ENCODE measurements at regions of chr1 and their contacts with region 1.

Region 1: DNA sequence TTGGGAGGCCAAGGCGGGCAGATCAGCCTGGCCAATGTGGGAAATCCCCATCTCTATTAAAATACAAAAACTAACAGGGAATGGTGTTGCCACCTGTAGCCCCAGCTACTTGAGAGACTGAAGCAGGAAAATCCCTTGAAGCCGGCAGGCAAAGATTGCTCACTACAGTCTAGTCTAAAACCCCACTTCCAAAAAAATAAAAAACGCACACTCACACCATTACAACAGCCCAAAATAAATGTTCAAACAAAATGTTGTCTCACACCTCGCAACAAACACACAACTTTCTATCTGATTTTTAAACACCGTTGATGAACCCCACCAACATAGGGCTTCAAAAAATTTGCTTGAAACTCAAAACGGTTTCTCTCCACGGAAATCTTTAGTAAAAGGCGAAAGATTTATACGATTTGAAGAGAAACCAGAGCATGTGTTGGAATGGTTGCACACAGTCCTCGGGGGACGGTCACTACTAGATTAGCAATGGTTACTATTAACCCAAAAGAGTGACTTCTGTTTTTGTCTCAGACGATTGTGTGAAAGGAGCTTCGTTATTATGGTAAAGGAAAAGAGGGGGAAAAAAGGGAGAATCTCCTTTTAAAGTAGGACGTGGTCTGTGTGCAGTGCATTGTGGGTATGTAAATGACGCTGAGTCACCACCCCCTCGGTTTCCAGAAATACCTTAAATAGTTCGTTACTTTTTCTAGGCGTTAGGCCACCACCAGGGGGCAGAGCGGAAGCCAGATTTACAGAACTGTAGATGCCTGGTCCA is at the start of gene RNU5D-1:
- DNase-seq: peak; percentile 84
- ATAC-seq: peak; percentile 71
- H3K4me3 Mint-ChIP-seq: peak within 1 kb of the TSS; percentile 78
- H3K27ac Mint-ChIP-seq: peak within 1 kb of the TSS; percentile 100
- H3K4me1 Mint-ChIP-seq: peaks cover 37% of the 10 kb centered on the region
- H3K27me3 Mint-ChIP-seq: no peaks in the 10 kb centered on the region
- CTCF ChIP-seq: peak; percentile 39
- total RNA-seq, gene RNU5D-1: not detected in 2 replicates

Region 2: DNA sequence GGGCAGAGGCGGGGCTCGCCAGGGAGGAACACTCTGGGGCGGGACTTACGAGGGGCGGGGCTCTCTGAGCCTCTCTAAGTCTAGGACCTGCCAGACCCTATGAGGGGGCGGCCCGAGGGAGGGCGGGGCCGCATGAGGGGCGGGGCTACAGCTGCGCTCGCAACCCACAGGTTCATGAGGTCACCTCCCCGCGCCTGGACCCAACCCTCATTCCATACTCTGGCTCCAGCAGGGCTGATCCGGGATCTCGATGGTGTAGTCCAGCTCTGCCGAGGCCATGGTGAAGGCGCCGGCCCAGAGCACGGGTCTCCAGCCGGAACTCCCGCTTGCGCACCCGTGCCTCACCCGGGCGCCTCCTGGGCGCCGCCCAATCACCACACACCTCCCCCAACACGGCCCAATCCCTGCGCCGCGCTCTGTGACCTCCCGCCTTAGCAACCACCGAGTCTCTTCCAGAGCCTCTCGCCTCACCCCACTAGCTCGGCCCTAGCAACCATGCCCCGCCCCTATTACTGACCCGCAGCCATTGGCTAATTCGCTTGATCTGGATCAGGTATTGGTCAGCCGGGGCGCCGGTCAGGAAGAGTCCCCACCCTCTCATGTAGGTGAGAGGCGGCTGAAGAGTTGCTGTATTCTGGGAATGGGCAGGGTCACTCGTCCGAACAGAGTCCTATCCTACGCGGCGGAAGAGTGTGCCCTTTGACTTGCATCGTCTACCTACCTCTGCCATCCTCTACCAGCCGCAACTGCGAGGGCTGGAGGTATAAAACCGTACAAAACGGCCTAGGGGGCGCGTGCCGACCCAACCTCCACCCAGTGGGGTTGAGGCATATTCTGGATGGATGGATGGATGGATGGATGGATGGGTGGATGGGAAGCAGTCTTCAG is 56.6 kb before region 1 on chr1 and contains the starts of genes ARMH1 and TMEM53:
- CTCF ChIA-PET with region 1: interaction called, 3 read pairs
- POLR2A ChIA-PET with region 1: interaction called, 21 read pairs
- intact Hi-C with region 1: loop called (anchors 2 kb)
- DNase-seq: peak; percentile 98
- ATAC-seq: peak; percentile 90
- H3K4me3 Mint-ChIP-seq: peak within 1 kb of the TSS; percentile 87
- H3K27ac Mint-ChIP-seq: peak within 1 kb of the TSS; percentile 93
- H3K4me1 Mint-ChIP-seq: peaks cover 32% of the 10 kb centered on the region
- H3K27me3 Mint-ChIP-seq: no peaks in the 10 kb centered on the region
- CTCF ChIP-seq: no peak
- total RNA-seq, gene ARMH1: 18.1 and 19.9 TPM in 2 replicates
- total RNA-seq, gene TMEM53: 4.6 and 4.8 TPM in 2 replicates

Region 3: DNA sequence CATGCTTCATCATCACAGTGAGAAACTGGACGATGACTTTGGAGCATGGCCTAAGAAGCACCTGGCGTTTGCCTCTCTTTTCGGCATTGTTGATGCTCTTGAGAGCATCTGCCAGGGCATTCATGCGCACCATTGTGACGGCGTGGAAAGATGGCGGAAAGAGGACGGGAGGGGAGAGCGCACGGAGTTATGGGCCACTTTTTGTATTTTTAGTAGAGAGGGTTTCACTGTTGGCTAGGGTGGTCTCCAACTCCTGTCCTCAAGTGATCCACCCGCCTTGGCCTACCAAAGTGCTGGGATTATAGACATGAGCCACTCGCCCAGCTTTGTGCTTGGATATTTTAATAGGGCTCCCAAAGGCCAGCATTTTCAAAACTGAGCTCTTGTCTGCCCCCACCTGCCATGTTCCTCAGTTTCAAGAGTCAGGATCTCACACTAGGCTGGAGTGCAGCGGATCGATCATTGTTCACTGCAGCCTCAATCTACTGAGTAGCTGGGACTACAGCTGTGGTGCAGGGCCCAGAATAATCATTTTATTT is 49.7 kb after region 1 on chr1:
- CTCF ChIA-PET with region 1: interaction called, 13 read pairs
- POLR2A ChIA-PET with region 1: interaction called, 149 read pairs
- intact Hi-C with region 1: loop called (anchors 1 kb)
- DNase-seq: no peak
- ATAC-seq: no peak
- H3K4me3 Mint-ChIP-seq: no peak overlapping the region
- H3K27ac Mint-ChIP-seq: peak overlapping the region; percentile 30
- H3K4me1 Mint-ChIP-seq: peaks cover 56% of the 10 kb centered on the region
- H3K27me3 Mint-ChIP-seq: no peaks in the 10 kb centered on the region
- CTCF ChIP-seq: no peak

Region 4: DNA sequence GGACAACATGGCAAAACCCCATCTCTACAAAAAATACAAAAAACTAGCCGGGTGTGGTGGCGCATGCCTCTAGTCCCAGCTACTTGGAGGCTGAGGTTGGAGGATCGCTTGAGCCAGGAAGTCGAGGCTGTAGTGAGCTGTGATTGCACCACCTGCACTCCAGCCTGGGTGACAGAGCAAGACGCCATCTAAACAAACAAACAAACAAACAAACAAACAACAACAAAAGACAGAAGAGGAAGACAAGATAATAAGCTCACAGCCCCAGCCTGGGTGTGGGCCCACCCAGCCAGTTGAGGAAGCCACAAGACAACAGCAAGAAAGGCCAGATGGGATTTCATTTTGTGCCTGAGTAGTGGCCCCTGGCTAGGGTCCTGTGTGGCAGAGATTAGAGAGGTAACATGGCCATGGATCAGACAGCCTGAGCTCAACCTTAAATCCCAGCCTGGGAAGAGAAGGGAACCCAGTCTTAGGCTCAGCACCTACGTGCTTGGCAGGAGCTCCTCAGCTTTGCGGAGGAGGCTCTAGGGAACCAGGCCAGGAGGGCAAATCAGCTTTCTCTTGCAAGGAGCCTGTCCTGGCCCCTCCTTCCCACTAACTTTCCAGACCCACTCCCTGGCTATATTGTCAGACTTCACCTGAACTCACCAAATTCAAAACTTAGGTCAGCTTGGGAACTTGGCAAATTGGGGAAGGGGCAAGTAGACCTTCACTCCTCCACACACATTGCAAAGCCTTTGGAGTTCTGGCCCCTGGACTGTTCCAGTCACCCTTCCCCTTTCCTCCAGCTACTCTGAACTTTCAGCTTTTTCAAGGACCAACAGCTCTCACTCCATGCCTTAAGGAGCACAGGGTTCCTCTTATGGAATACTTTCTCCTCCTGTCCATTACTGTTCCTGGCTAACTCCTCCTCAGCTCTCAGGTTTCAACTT is 62.1 kb after region 1 on chr1:
- CTCF ChIA-PET with region 1: interaction called, 13 read pairs
- POLR2A ChIA-PET with region 1: interaction called, 62 read pairs
- intact Hi-C with region 1: no loop called
- DNase-seq: no peak
- ATAC-seq: no peak
- H3K4me3 Mint-ChIP-seq: no peak overlapping the region
- H3K27ac Mint-ChIP-seq: no peak overlapping the region
- H3K4me1 Mint-ChIP-seq: no peaks in the 10 kb centered on the region
- H3K27me3 Mint-ChIP-seq: no peaks in the 10 kb centered on the region
- CTCF ChIP-seq: no peak

Region 5: DNA sequence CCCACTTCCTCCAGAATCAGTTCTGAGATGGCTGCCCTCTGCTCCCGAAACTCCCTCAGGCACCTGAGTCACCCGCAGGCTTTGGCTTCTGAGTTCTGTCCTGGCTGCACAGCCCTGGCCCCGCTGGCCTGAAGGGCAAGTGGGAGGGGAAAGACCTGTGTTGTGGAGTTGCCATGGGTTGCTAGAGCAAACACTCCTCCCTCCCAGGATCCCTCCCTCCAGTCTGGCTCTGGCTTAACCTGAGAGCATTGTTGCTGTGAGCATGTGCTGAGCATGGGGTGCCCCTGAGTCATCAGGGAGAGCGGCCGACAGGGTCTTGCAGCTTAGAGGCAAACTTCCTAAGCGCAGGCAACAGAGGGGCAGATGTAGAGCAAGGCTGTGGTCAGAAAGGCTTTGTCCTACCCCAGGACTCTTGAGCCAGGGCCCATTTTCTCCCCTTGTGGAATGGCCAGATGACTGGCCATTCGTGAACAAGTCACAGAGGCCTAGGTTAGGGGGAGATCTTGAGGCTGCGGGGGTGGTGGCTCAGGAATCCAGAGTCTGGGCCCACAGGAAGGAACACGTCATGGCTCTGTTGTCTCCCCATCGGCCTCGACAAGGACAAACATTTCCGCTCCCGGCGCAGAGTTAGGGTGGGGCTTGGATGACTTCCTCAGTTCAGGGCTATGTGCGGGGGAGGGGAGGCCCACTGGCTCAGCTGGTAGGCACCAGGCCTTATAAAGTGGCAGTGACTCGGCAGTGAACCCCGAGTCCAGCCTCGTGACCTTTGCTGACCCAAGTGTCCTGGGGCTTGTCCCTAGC is 76.5 kb after region 1 on chr1 and contains the start of gene DYNLT4:
- CTCF ChIA-PET with region 1: interaction called, 6 read pairs
- POLR2A ChIA-PET with region 1: interaction called, 55 read pairs
- intact Hi-C with region 1: no loop called
- DNase-seq: peak; percentile 67
- ATAC-seq: peak; percentile 32
- H3K4me3 Mint-ChIP-seq: peak within 1 kb of the TSS; percentile 63
- H3K27ac Mint-ChIP-seq: peak within 1 kb of the TSS; percentile 97
- H3K4me1 Mint-ChIP-seq: peaks cover 67% of the 10 kb centered on the region
- H3K27me3 Mint-ChIP-seq: no peaks in the 10 kb centered on the region
- CTCF ChIP-seq: no peak
- total RNA-seq, gene DYNLT4: not detected in 2 replicates

Region 6: GRCh38 chr1:45339789-45340570 is 609.1 kb after region 1 on chr1 and contains the starts of genes MUTYH and TOE1:
- CTCF ChIA-PET with region 1: no interaction called
- POLR2A ChIA-PET with region 1: interaction called, 16 read pairs
- intact Hi-C with region 1: loop called (anchors 2 kb)
- DNase-seq: peak; percentile 85
- ATAC-seq: peak; percentile 86
- H3K4me3 Mint-ChIP-seq: peak within 1 kb of the TSS; percentile 100
- H3K27ac Mint-ChIP-seq: peak within 1 kb of the TSS; percentile 99
- H3K4me1 Mint-ChIP-seq: peaks cover 39% of the 10 kb centered on the region
- H3K27me3 Mint-ChIP-seq: no peaks in the 10 kb centered on the region
- CTCF ChIP-seq: no peak
- total RNA-seq, gene MUTYH: 61.0 and 63.0 TPM in 2 replicates
- total RNA-seq, gene TOE1: 24.6 and 25.3 TPM in 2 replicates

Region 7: DNA sequence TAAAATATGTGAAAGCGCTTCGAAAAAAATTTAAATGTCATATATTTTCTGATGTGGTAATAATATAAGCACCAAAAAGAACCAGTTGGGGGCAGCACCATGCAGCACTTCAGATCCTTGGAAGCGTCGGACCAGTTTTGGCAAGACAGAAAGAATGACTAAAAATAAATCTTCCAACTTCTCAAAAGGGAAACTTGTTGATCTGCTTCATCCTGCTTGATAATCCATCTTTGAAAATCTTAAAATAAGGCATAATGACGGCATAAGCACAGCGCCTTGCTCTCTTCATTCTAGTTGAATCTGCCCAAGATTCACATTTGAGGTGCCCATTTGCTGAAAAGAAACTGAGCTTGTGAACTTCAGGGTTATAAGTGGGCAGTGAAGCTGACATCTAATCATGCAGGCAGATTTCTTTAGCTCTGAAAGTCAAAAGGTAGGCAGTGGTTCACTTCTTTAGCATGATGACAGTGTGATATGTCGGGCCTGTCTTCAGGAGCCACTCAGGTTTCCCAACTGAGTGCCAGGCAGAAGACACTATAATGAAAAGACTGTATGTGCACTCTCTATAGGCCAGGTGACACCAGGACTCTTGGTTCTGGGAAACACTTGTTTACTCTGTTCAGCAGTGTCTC is 629.1 kb after region 1 on chr1:
- CTCF ChIA-PET with region 1: no interaction called
- POLR2A ChIA-PET with region 1: no interaction called
- intact Hi-C with region 1: no loop called
- DNase-seq: no peak
- ATAC-seq: peak; percentile 73
- H3K4me3 Mint-ChIP-seq: peak overlapping the region; percentile 1
- H3K27ac Mint-ChIP-seq: peak overlapping the region; percentile 37
- H3K4me1 Mint-ChIP-seq: peaks cover 19% of the 10 kb centered on the region
- H3K27me3 Mint-ChIP-seq: no peaks in the 10 kb centered on the region
- CTCF ChIP-seq: no peak

Measured in activated B cell treated with CpG ODN at 0.5 μM for 24 hours (primary cell).